ENCODE measurements at regions of chr3 and their contacts with region 1.

Region 1: GRCh38 chr3:71859123-71859519 is 74.2 kb upstream of the PROK2 start:
- DNase-seq: peak in 5 of 14 experiments; percentile 8 to 79 (median 73)
- ATAC-seq: peak; percentile 82
- H3K4me3 ChIP-seq: no peak overlapping the region
- H3K4me3 Mint-ChIP-seq: no peak overlapping the region
- H3K27ac ChIP-seq: no peak overlapping the region
- H3K27ac Mint-ChIP-seq: no peak overlapping the region
- H3K4me1 ChIP-seq: peaks cover 5% of the 10 kb centered on the region
- H3K4me1 Mint-ChIP-seq: peaks cover 6% of the 10 kb centered on the region
- H3K27me3 ChIP-seq: peaks cover 0 to 7% of the 10 kb centered on the region in 2 experiments
- H3K27me3 Mint-ChIP-seq: peaks cover 25% of the 10 kb centered on the region
- CTCF ChIP-seq: peak; percentile 66

Region 2: DNA sequence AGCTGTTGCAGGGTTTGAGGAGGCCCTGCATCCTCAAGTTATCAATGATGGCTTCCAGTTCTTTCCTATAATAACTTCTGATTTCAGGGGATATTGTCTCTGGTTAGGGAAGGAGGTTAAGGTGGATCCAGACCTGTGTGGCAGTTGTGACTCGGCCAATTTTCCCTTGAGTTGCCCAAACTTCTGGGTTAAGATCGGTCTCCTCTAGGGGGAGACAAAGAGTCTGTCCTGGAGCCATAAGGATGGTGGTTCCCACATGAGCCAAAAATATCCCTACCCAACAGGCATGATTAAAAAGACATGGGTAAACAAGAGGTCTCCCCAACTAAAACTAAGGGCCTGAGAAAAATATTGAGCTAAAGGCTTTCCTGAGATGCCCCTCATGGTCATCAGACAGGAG is 1319.2 kb before region 1 on chr3:
- CTCF ChIA-PET with region 1: no interaction called
- POLR2A ChIA-PET with region 1: no interaction called
- intact Hi-C with region 1: loop called in 1 of 2 experiments (anchors 10 kb)
- DNase-seq: no peak
- ATAC-seq: no peak
- H3K4me3 ChIP-seq: no peak overlapping the region
- H3K4me3 Mint-ChIP-seq: no peak overlapping the region
- H3K27ac ChIP-seq: no peak overlapping the region
- H3K27ac Mint-ChIP-seq: no peak overlapping the region
- H3K4me1 ChIP-seq: no peaks in the 10 kb centered on the region
- H3K4me1 Mint-ChIP-seq: no peaks in the 10 kb centered on the region
- H3K27me3 ChIP-seq: peaks cover 6 to 17% of the 10 kb centered on the region in 2 experiments
- H3K27me3 Mint-ChIP-seq: peaks cover 19% of the 10 kb centered on the region
- CTCF ChIP-seq: no peak

Region 3: DNA sequence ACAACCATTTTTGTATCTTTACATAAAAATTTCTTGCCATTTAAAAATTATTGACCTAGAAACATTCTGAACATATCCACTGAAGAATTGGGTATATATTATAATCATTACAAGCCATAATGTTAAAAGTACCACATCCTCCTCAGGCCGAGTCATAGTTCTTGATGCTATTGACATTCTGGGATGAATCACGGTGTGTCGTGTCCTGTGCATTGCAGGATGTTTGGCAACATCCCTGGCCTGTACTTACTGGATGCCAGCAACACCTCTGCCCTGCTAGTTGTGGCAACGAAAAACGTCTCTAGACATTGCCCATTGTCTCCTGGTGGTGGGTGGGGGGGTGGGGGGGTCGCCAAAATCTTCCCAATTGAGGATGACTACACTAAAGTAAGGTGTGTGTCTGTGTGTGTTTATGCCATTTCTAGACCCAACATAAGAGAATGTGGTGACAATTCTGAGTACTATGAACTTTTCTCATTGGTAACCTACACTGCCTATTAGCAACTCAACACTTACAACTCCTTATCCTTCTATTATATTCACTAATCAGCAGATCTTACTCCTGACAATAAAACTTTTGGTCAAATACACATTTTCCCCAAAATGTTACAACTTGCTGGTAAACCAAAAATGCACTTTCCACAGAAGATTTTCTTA is 747.2 kb before region 1 on chr3:
- CTCF ChIA-PET with region 1: no interaction called
- POLR2A ChIA-PET with region 1: no interaction called
- intact Hi-C with region 1: no loop called
- DNase-seq: peak in 1 of 14 experiments; percentile 34
- ATAC-seq: no peak
- H3K4me3 ChIP-seq: no peak overlapping the region
- H3K4me3 Mint-ChIP-seq: no peak overlapping the region
- H3K27ac ChIP-seq: no peak overlapping the region
- H3K27ac Mint-ChIP-seq: peak overlapping the region; percentile 83
- H3K4me1 ChIP-seq: peaks cover 30% of the 10 kb centered on the region
- H3K4me1 Mint-ChIP-seq: peaks cover 94% of the 10 kb centered on the region
- H3K27me3 ChIP-seq: no peaks in the 10 kb centered on the region
- H3K27me3 Mint-ChIP-seq: no peaks in the 10 kb centered on the region
- CTCF ChIP-seq: no peak

Region 4: DNA sequence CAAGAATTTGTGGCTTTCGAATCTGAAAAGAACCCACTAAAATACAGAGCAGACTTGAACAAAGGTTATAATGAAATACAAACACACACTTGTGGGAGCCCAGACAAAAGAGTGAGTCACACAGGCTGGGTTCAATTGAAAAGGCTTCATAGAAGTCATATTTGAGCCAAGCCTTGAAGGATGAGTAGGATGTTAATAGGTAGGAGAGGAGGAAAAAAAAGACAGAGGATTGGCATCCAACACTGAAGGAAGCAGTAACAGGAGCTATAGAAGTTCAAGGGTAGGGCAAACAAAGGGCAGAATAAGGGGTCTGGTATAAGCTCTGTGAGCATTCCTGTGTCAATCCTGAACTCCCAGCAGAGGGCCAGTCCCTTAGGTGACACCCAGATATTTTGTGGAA is 601.0 kb before region 1 on chr3:
- CTCF ChIA-PET with region 1: no interaction called
- POLR2A ChIA-PET with region 1: no interaction called
- intact Hi-C with region 1: no loop called
- DNase-seq: peak in 1 of 14 experiments; percentile 27
- ATAC-seq: no peak
- H3K4me3 ChIP-seq: no peak overlapping the region
- H3K4me3 Mint-ChIP-seq: no peak overlapping the region
- H3K27ac ChIP-seq: no peak overlapping the region
- H3K27ac Mint-ChIP-seq: peak overlapping the region; percentile 38
- H3K4me1 ChIP-seq: peaks cover 14% of the 10 kb centered on the region
- H3K4me1 Mint-ChIP-seq: peaks cover 72% of the 10 kb centered on the region
- H3K27me3 ChIP-seq: no peaks in the 10 kb centered on the region
- H3K27me3 Mint-ChIP-seq: no peaks in the 10 kb centered on the region
- CTCF ChIP-seq: no peak

Region 5: DNA sequence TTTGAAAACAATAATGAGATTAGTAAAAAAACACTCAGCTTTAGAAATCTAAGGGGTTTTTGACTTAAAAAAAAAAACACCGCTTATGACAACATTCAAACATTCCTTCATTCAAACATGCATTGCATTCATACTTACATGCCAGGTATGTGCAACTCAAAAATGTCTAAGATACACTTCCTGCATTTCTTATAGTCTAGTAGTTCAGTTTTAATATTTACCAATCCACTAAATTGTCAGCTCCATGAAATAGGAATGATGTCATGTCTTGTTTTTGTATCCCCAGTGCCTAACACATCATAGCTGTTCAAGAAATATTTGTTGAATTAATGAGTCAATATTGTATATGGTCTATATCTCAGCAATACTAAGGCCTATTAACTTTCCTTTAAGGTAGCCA is 185.6 kb before region 1 on chr3:
- CTCF ChIA-PET with region 1: no interaction called
- POLR2A ChIA-PET with region 1: no interaction called
- intact Hi-C with region 1: no loop called
- DNase-seq: no peak
- ATAC-seq: no peak
- H3K4me3 ChIP-seq: no peak overlapping the region
- H3K4me3 Mint-ChIP-seq: no peak overlapping the region
- H3K27ac ChIP-seq: no peak overlapping the region
- H3K27ac Mint-ChIP-seq: no peak overlapping the region
- H3K4me1 ChIP-seq: no peaks in the 10 kb centered on the region
- H3K4me1 Mint-ChIP-seq: peaks cover 8% of the 10 kb centered on the region
- H3K27me3 ChIP-seq: no peaks in the 10 kb centered on the region
- H3K27me3 Mint-ChIP-seq: no peaks in the 10 kb centered on the region
- CTCF ChIP-seq: no peak

Region 6: GRCh38 chr3:71734883-71735282 is 124.2 kb before region 1 on chr3:
- CTCF ChIA-PET with region 1: interaction called, 3 read pairs
- POLR2A ChIA-PET with region 1: interaction called, 3 read pairs
- intact Hi-C with region 1: loop called (anchors 1 to 5 kb)
- DNase-seq: no peak
- ATAC-seq: no peak
- H3K4me3 ChIP-seq: no peak overlapping the region
- H3K4me3 Mint-ChIP-seq: no peak overlapping the region
- H3K27ac ChIP-seq: no peak overlapping the region
- H3K27ac Mint-ChIP-seq: no peak overlapping the region
- H3K4me1 ChIP-seq: peaks cover 7% of the 10 kb centered on the region
- H3K4me1 Mint-ChIP-seq: peaks cover 14% of the 10 kb centered on the region
- H3K27me3 ChIP-seq: no peaks in the 10 kb centered on the region
- H3K27me3 Mint-ChIP-seq: no peaks in the 10 kb centered on the region
- CTCF ChIP-seq: no peak

Region 7: GRCh38 chr3:72171463-72171881 is 312.4 kb after region 1 on chr3:
- CTCF ChIA-PET with region 1: no interaction called
- POLR2A ChIA-PET with region 1: no interaction called
- intact Hi-C with region 1: no loop called
- DNase-seq: no peak
- ATAC-seq: no peak
- H3K4me3 ChIP-seq: no peak overlapping the region
- H3K4me3 Mint-ChIP-seq: no peak overlapping the region
- H3K27ac ChIP-seq: no peak overlapping the region
- H3K27ac Mint-ChIP-seq: no peak overlapping the region
- H3K4me1 ChIP-seq: no peaks in the 10 kb centered on the region
- H3K4me1 Mint-ChIP-seq: peaks cover 5% of the 10 kb centered on the region
- H3K27me3 ChIP-seq: peaks cover 2 to 3% of the 10 kb centered on the region in 2 experiments
- H3K27me3 Mint-ChIP-seq: peaks cover 14% of the 10 kb centered on the region
- CTCF ChIP-seq: no peak

Measured in CD4-positive, alpha-beta T cell (primary cell).